Activated naive CD4-positive, alpha-beta T cell treated with anti-CD3 and anti-CD28 coated beads, Interleukin-2, amount 10 ng/mL, durations not matched to agents 7 days and 5 days (primary cell): ENCODE measurements at regions of chr1 and their contacts with region 1.

Region 1: DNA sequence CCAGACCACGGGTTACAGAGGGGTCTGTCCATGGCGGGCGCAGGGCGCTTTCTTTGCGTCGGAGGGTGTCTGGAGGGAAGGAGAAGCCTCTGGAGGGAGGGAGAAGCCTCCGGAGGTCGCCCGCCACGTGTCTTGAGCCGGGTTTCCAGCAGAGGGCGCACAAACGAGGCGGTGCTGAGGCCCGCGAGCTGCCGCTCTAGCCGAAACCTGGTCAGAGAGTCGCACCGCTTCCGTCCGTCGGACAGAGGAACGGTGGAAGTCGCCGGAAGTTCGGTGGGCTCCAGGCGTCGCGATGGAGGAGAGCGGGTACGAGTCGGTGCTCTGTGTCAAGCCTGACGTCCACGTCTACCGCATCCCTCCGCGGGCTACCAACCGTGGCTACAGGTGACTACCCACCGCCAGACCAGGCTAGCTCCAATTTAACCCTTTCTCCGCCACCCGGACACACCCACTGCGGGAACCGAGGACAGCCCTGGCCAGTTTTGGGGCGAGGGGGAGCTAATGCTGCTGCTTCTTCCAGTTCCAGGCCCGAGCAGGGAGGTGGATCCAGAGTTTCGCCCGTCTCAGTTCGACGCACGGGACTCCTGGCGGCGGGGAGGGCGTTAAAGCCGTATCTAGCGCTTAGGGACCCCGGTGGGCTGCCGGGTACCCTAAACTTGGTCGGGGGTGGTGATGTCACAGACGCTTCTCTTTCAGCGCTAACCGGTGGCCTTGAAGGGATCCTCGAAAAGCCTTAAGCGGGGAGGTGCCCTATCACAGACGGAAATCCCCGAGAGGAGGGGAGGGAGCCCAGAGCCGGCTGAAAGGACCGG is at the start of gene NECAP2:
- DNase-seq: peak; percentile 95
- H3K4me3 Mint-ChIP-seq: peak within 1 kb of the TSS; percentile 87
- H3K27ac Mint-ChIP-seq: peak within 1 kb of the TSS; percentile 89
- H3K4me1 Mint-ChIP-seq: peaks cover 45% of the 10 kb centered on the region
- H3K27me3 Mint-ChIP-seq: peaks cover 13% of the 10 kb centered on the region

Region 2: GRCh38 chr1:16420424-16421118 is 20.1 kb before region 1 on chr1:
- CTCF ChIA-PET with region 1: interaction called, 12 read pairs
- DNase-seq: peak; percentile 82
- H3K4me3 Mint-ChIP-seq: peak overlapping the region; percentile 15
- H3K27ac Mint-ChIP-seq: peak overlapping the region; percentile 92
- H3K4me1 Mint-ChIP-seq: peaks cover 46% of the 10 kb centered on the region
- H3K27me3 Mint-ChIP-seq: peaks cover 10% of the 10 kb centered on the region

Region 3: GRCh38 chr1:16430606-16431005 is 10.1 kb before region 1 on chr1:
- CTCF ChIA-PET with region 1: interaction called, 11 read pairs
- DNase-seq: no peak
- H3K4me3 Mint-ChIP-seq: no peak overlapping the region
- H3K27ac Mint-ChIP-seq: no peak overlapping the region
- H3K4me1 Mint-ChIP-seq: no peaks in the 10 kb centered on the region
- H3K27me3 Mint-ChIP-seq: peaks cover 41% of the 10 kb centered on the region